ENCODE measurements at regions of chr20 and their contacts with region 1.

Region 1: GRCh38 chr20:40990542-40991120 is 38.0 kb upstream of the TOP1 start:
- DNase-seq: peak; percentile 60 to 90 (median 75)
- ATAC-seq: peak; percentile 99
- H3K4me3 ChIP-seq: no peak overlapping the region
- H3K27ac ChIP-seq: peak overlapping the region; percentile 30; the same call in 2 of the 3 replicates
- H3K4me1 ChIP-seq: peaks cover 13 to 15% of the 10 kb centered on the region in 2 experiments
- H3K27me3 ChIP-seq: no peaks in the 10 kb centered on the region
- CTCF ChIP-seq: peak; percentile 86 to 93 (median 93)
- EP300 ChIP-seq: 0 out of 2 replicates have a peak, but pooled peaks have one; percentile 28
- POLR2A ChIP-seq: no peak
- RAD21 ChIP-seq: peak; percentile 85 to 96

Region 2: DNA sequence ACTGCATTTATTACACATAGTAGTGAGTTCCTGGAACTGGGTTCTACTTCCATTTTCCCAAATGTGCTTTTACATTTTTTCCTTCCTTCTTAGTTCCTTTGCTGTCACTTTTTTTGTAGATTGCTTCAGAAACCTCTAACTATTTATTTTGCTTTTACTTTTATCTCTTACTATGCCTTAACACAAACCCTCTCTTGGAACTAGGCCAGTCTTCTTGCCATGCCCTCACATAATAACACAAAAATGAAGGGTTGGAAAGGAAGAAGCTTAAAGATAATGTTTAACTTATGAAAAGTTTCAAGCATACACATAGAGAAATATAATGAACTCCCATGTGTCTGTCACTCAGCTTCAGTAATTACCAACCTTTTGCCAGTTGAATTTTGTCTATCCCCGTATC is 65.0 kb after region 1 on chr20:
- CTCF ChIA-PET with region 1: no interaction called
- POLR2A ChIA-PET with region 1: interaction called, 4 read pairs
- in situ Hi-C with region 1: no loop called
- intact Hi-C with region 1: loop called (anchors 2 kb)
- DNase-seq: no peak
- ATAC-seq: no peak
- H3K4me3 ChIP-seq: no peak overlapping the region
- H3K27ac ChIP-seq: peak overlapping the region; percentile 37; the same call in 2 of the 3 replicates
- H3K4me1 ChIP-seq: peaks cover 0 to 60% of the 10 kb centered on the region in 2 experiments
- H3K27me3 ChIP-seq: no peaks in the 10 kb centered on the region
- CTCF ChIP-seq: no peak
- EP300 ChIP-seq: no peak
- POLR2A ChIP-seq: no peak
- RAD21 ChIP-seq: no peak

Region 3: GRCh38 chr20:41078329-41078728 is 87.7 kb after region 1 on chr20:
- CTCF ChIA-PET with region 1: interaction called, 4 read pairs
- POLR2A ChIA-PET with region 1: no interaction called
- in situ Hi-C with region 1: no loop called
- intact Hi-C with region 1: loop called (anchors 2 kb)
- DNase-seq: peak in 1 of 4 experiments; percentile 24
- ATAC-seq: 0 out of 3 replicates have a peak, but pooled peaks have one; percentile 31
- H3K4me3 ChIP-seq: no peak overlapping the region
- H3K27ac ChIP-seq: no peak overlapping the region
- H3K4me1 ChIP-seq: peaks cover 8 to 24% of the 10 kb centered on the region in 2 experiments; a peak in 4 of 5 replicates
- H3K27me3 ChIP-seq: no peaks in the 10 kb centered on the region
- CTCF ChIP-seq: peak; percentile 22 to 51 (median 22); a peak in 3 of 6 replicates
- EP300 ChIP-seq: no peak
- POLR2A ChIP-seq: no peak
- RAD21 ChIP-seq: peak in 1 of 2 experiments; percentile 63; a peak in 2 of 4 replicates

Region 4: GRCh38 chr20:41086402-41087338 is 96.0 kb after region 1 on chr20:
- CTCF ChIA-PET with region 1: no interaction called
- POLR2A ChIA-PET with region 1: no interaction called
- in situ Hi-C with region 1: loop called (anchors 5 kb)
- intact Hi-C with region 1: loop called (anchors 2 kb)
- DNase-seq: peak; percentile 35 to 85 (median 58)
- ATAC-seq: peak; percentile 95
- H3K4me3 ChIP-seq: no peak overlapping the region
- H3K27ac ChIP-seq: peak overlapping the region; percentile 78
- H3K4me1 ChIP-seq: peaks cover 9 to 17% of the 10 kb centered on the region in 2 experiments
- H3K27me3 ChIP-seq: no peaks in the 10 kb centered on the region
- CTCF ChIP-seq: no peak
- EP300 ChIP-seq: peak; percentile 82
- POLR2A ChIP-seq: no peak
- RAD21 ChIP-seq: no peak

Region 5: GRCh38 chr20:41095110-41095969 is 104.7 kb after region 1 on chr20:
- CTCF ChIA-PET with region 1: interaction called, 26 read pairs
- POLR2A ChIA-PET with region 1: no interaction called
- in situ Hi-C with region 1: loop called (anchors 5 kb)
- intact Hi-C with region 1: loop called (anchors 1 kb)
- DNase-seq: peak; percentile 68 to 71 (median 70)
- ATAC-seq: peak; percentile 91
- H3K4me3 ChIP-seq: no peak overlapping the region
- H3K27ac ChIP-seq: no peak overlapping the region
- H3K4me1 ChIP-seq: no peaks in the 10 kb centered on the region
- H3K27me3 ChIP-seq: no peaks in the 10 kb centered on the region
- CTCF ChIP-seq: peak; percentile 84 to 91 (median 84)
- EP300 ChIP-seq: no peak
- POLR2A ChIP-seq: no peak
- RAD21 ChIP-seq: peak; percentile 88 to 90

Region 6: DNA sequence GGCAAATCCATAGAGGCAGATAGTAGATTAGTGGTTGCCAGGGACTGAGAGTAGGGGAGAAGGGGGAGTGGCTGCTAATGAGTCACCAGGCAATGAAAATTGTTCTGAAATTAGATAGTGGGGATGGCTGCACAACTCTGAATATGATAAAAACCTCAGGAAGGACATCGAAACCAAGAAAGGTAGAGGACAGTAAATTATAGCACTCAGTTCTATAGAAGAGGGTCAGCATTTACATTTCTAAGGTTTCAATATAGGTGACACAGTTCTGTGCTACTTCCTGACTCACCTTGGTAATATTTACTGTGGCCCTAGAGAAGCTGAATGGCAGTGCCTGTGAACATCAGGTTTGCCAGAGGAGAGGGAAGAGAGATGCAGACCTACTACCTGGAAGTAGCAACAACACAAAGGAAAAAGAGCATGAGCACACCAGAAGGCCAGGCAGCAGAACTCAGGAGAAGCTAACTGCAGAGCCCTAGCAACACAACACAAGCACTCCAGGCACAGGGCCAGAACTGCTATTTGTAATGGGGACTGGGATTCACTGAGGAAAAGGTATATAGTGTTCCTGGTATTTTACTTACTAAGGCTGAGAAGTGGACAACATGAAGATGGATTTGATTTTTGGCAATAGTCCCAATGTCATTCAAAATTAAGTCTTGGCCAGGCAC is 222.7 kb after region 1 on chr20:
- CTCF ChIA-PET with region 1: no interaction called
- POLR2A ChIA-PET with region 1: no interaction called
- in situ Hi-C with region 1: no loop called
- intact Hi-C with region 1: no loop called
- DNase-seq: peak in 1 of 4 experiments; percentile 24
- ATAC-seq: peak; percentile 72
- H3K4me3 ChIP-seq: no peak overlapping the region
- H3K27ac ChIP-seq: no peak overlapping the region
- H3K4me1 ChIP-seq: peaks cover 0 to 7% of the 10 kb centered on the region in 2 experiments; a peak in 2 of 5 replicates
- H3K27me3 ChIP-seq: no peaks in the 10 kb centered on the region
- CTCF ChIP-seq: no peak
- EP300 ChIP-seq: no peak
- POLR2A ChIP-seq: no peak
- RAD21 ChIP-seq: no peak

Measured in K562 (cell line).